ENCODE measurements at regions of chr14 and their contacts with region 1.

Region 1: GRCh38 chr14:102437997-102438915 is 71.3 kb downstream of the ANKRD9 start:
- DNase-seq: no peak
- H3K4me3 ChIP-seq: peak overlapping the region in 2 of 4 donors; percentile 31 to 55
- H3K27ac ChIP-seq: no peak overlapping the region
- H3K4me1 ChIP-seq: peaks cover 0 to 18% (median 0%) of the 10 kb centered on the region in 3 donors
- H3K27me3 ChIP-seq: no peaks in the 10 kb centered on the region
- CTCF ChIP-seq: peak; percentile 61 to 90 (median 72)
- POLR2A ChIP-seq: no peak

Region 2: GRCh38 chr14:101552786-101553231 is 885.4 kb before region 1 on chr14:
- intact Hi-C with region 1: no loop called
- DNase-seq: no peak
- H3K4me3 ChIP-seq: no peak overlapping the region
- H3K27ac ChIP-seq: no peak overlapping the region
- H3K4me1 ChIP-seq: peaks cover 0 to 20% (median 13%) of the 10 kb centered on the region in 3 donors
- H3K27me3 ChIP-seq: peaks cover 0 to 49% (median 0%) of the 10 kb centered on the region in 4 donors
- CTCF ChIP-seq: no peak
- POLR2A ChIP-seq: no peak

Region 3: DNA sequence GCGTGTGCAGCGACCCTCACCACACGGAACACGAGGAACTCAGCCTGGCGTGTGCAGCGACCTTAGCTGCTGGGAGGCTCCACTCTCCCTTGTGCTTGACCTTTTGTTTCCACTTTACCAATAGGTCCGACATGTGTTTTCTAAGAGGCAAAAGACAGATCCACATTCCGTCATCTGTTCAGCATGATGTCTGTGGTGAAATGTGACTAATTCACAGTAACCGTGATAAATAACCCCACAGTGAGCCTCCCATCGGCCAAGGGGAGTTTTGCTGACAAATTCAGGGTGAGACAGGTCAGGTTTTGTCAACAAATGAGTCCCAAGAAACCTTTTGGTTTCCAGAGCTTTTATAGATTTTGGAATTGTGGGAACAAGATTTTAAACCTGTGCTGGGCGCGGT is 189.2 kb before region 1 on chr14:
- intact Hi-C with region 1: no loop called
- DNase-seq: no peak
- H3K4me3 ChIP-seq: no peak overlapping the region
- H3K27ac ChIP-seq: no peak overlapping the region
- H3K4me1 ChIP-seq: peaks cover 0 to 10% (median 0%) of the 10 kb centered on the region in 3 donors
- H3K27me3 ChIP-seq: no peaks in the 10 kb centered on the region
- CTCF ChIP-seq: no peak
- POLR2A ChIP-seq: no peak

Region 4: DNA sequence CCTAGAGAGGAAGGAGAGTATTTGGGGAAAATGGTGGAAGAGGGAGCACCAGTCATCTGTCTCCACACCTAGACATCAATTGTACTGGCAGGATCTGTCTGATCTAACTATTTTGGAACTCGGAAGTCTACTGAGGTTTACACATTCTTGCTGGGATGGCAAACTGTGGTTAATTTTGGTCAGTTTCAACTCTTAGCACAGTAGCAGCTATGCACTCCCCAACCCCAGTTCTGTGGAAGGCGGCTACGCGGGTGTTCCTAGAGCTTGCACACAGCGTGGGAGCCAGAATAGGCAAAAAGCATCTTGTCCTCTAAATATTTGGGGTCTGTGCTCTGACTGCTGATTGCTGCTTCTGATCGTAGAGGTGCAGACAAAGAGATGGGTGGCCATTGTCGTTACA is 41.7 kb before region 1 on chr14:
- intact Hi-C with region 1: no loop called
- DNase-seq: no peak
- H3K4me3 ChIP-seq: no peak overlapping the region
- H3K27ac ChIP-seq: no peak overlapping the region
- H3K4me1 ChIP-seq: peaks cover 0 to 6% (median 0%) of the 10 kb centered on the region in 3 donors
- H3K27me3 ChIP-seq: no peaks in the 10 kb centered on the region
- CTCF ChIP-seq: no peak
- POLR2A ChIP-seq: no peak

Region 5: GRCh38 chr14:102516531-102517415 is 78.5 kb after region 1 on chr14:
- intact Hi-C with region 1: loop called (anchors 2 kb)
- DNase-seq: no peak
- H3K4me3 ChIP-seq: peak overlapping the region; percentile 54 to 85 (median 66)
- H3K27ac ChIP-seq: peak overlapping the region; percentile 51 to 81 (median 70)
- H3K4me1 ChIP-seq: peaks cover 5 to 17% (median 10%) of the 10 kb centered on the region in 3 donors
- H3K27me3 ChIP-seq: no peaks in the 10 kb centered on the region
- CTCF ChIP-seq: peak; percentile 72 to 99 (median 98)
- POLR2A ChIP-seq: no peak

Region 6: DNA sequence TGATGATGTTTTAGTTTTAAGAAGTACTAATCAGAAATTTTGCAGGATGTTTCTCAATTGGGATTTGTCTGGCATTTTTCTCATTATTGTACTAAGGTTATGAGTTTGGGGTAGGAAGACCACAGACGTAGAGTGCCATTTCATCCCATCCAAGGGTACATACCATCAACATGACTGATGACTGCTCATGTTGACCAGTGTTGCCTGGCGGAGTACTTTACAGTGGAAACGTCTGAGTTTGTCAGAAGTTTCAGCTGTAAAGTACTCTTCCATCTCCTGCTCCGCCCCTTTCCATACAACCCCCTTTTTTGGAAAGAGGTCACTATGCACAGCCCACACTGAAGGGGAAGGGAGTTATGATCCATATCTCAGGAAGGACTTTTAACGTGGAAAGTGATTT is 228.4 kb after region 1 on chr14:
- intact Hi-C with region 1: no loop called
- DNase-seq: no peak
- H3K4me3 ChIP-seq: no peak overlapping the region
- H3K27ac ChIP-seq: no peak overlapping the region
- H3K4me1 ChIP-seq: peaks cover 0 to 29% (median 2%) of the 10 kb centered on the region in 3 donors
- H3K27me3 ChIP-seq: no peaks in the 10 kb centered on the region
- CTCF ChIP-seq: no peak
- POLR2A ChIP-seq: no peak

Measured in esophagus squamous epithelium (tissue), 5 donors.